ENCODE measurements at regions of chr7 and their contacts with region 1.

Region 1: DNA sequence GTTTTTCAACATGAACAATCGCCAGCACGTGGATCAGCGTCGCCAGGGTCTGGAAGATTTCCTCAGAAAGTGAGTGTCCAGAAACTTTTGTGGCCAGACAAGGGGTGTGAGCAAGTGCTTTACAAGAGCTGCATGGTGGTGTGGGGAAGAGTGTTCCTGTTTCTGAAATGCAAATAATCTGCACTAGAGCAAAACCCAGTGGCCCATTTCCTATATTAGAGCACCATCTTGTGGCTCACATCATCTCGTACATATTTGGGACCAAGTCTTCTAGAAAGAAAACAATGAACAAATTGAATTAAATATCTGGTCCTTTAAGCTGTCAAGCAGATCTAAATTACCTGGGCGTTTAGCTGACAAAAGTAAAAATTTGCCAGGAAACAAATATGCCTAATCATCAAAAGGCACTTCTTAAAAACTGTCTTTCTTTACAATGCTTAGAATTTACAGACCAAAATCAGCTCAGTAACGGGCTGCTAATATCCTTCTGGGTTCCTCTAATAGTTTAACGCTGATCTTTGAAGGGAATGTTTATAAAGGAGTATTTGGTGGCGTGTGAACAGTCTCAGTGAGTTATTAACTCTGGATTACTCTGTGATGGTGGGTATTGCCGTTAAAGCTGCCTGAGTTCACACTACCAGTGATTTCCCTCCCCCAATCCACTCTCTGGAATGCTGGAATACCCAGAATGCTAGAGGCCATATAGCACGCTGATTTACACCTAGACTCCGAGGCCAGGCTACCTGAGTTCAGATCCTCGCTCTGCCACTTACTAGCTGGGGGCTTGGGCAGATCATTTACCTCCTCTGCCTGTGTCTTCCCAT is 73.6 kb downstream of the SNX10 start:
- DNase-seq: peak in 8 of 9 experiments; percentile 20 to 82 (median 53)
- ATAC-seq: peak; percentile 77
- H3K4me3 ChIP-seq: no peak overlapping the region
- H3K4me3 Mint-ChIP-seq: no peak overlapping the region
- H3K27ac ChIP-seq: no peak overlapping the region
- H3K27ac Mint-ChIP-seq: no peak overlapping the region
- H3K4me1 ChIP-seq: peaks cover 8% of the 10 kb centered on the region
- H3K4me1 Mint-ChIP-seq: peaks cover 11% of the 10 kb centered on the region
- H3K27me3 ChIP-seq: no peaks in the 10 kb centered on the region
- H3K27me3 Mint-ChIP-seq: no peaks in the 10 kb centered on the region
- CTCF ChIP-seq: peak; percentile 75

Region 2: GRCh38 chr7:25259587-25260243 is 1105.6 kb before region 1 on chr7:
- CTCF ChIA-PET with region 1: no interaction called
- POLR2A ChIA-PET with region 1: no interaction called
- intact Hi-C with region 1: loop called in 1 of 2 experiments (anchors 10 kb)
- DNase-seq: peak; percentile 24 to 83 (median 65)
- ATAC-seq: peak; percentile 83
- H3K4me3 ChIP-seq: no peak overlapping the region
- H3K4me3 Mint-ChIP-seq: peak overlapping the region; percentile 61
- H3K27ac ChIP-seq: no peak overlapping the region
- H3K27ac Mint-ChIP-seq: no peak overlapping the region
- H3K4me1 ChIP-seq: peaks cover 20% of the 10 kb centered on the region
- H3K4me1 Mint-ChIP-seq: peaks cover 25% of the 10 kb centered on the region
- H3K27me3 ChIP-seq: no peaks in the 10 kb centered on the region
- H3K27me3 Mint-ChIP-seq: peaks cover 3% of the 10 kb centered on the region
- CTCF ChIP-seq: peak; percentile 81

Region 3: DNA sequence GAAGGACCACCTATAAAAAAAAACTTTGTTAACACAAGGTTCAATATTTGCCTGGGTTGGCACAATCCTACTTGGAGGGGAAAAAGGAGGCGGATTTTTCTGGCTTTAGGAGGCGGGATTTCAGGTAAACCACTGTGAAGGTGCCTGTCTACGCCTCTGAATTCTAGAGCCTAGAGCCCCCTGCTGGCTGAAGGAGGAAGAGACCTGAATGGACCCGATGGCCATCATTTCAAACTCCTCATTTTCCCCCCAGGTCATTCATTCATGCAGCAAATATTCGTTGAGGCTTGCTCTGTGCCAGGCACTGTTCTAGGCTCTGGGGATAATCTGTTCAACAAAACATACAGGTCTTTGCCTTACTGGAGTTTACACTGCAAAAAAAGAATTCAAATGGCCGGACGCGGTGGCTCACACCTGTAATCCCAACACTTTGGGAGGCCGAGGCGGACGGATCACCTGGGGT is 303.6 kb before region 1 on chr7:
- CTCF ChIA-PET with region 1: interaction called, 7 read pairs
- POLR2A ChIA-PET with region 1: no interaction called
- intact Hi-C with region 1: loop called in 1 of 2 experiments (anchors 1 kb)
- DNase-seq: peak; percentile 30 to 81 (median 73)
- ATAC-seq: peak; percentile 85
- H3K4me3 ChIP-seq: no peak overlapping the region
- H3K4me3 Mint-ChIP-seq: no peak overlapping the region
- H3K27ac ChIP-seq: no peak overlapping the region
- H3K27ac Mint-ChIP-seq: no peak overlapping the region
- H3K4me1 ChIP-seq: no peaks in the 10 kb centered on the region
- H3K4me1 Mint-ChIP-seq: no peaks in the 10 kb centered on the region
- H3K27me3 ChIP-seq: no peaks in the 10 kb centered on the region
- H3K27me3 Mint-ChIP-seq: peaks cover 20% of the 10 kb centered on the region
- CTCF ChIP-seq: peak; percentile 91

Region 4: DNA sequence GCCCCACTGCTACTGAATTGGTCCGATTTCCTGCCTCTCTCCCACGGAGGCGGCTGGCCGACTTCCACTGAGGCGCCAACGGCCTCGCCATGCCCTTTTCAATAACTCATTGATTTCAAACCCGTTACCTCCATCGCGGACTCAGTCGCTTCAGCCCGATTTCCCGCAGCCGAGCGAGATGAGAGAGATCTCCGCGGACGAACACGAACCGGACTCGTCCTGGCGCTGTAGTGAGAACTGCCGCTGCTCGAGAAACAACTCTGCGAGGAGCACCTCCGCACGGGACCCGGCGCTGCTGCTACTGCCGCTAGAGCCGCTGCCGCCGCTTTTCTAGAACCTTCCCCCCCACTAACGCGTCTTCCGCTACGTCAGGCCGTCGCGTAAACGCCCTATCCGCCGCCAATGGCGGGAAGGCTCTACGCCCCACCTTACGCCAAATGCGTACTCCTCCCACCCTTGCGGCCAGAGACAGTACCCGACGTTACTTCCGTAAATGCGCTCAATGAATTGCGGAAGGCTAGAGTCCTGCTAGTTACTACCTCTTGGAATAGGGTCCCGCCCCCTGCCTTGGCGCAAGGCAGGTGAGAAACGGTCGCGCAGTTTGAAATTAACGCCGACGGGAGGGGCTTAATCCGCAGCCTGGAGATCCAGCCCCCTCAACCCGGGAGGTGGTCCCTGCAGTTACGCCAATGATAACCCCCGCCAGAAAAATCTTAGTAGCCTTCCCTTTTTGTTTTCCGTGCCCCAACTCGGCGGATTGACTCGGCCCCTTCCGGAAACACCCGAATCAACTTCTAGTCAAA is 164.6 kb before region 1 on chr7 and contains the start of gene HNRNPA2B1:
- CTCF ChIA-PET with region 1: interaction called, 37 read pairs
- POLR2A ChIA-PET with region 1: interaction called, 9 read pairs
- intact Hi-C with region 1: loop called (anchors 2 kb)
- DNase-seq: peak; percentile 96 to 100 (median 98)
- ATAC-seq: peak; percentile 75
- H3K4me3 ChIP-seq: peak within 1 kb of the TSS; percentile 75 to 95
- H3K4me3 Mint-ChIP-seq: peak within 1 kb of the TSS; percentile 100
- H3K27ac ChIP-seq: peak within 1 kb of the TSS; percentile 92 to 95
- H3K27ac Mint-ChIP-seq: peak within 1 kb of the TSS; percentile 99
- H3K4me1 ChIP-seq: peaks cover 49% of the 10 kb centered on the region
- H3K4me1 Mint-ChIP-seq: peaks cover 51% of the 10 kb centered on the region
- H3K27me3 ChIP-seq: no peaks in the 10 kb centered on the region
- H3K27me3 Mint-ChIP-seq: no peaks in the 10 kb centered on the region
- CTCF ChIP-seq: no peak
- total RNA-seq, gene HNRNPA2B1: 241 to 247 TPM

Region 5: DNA sequence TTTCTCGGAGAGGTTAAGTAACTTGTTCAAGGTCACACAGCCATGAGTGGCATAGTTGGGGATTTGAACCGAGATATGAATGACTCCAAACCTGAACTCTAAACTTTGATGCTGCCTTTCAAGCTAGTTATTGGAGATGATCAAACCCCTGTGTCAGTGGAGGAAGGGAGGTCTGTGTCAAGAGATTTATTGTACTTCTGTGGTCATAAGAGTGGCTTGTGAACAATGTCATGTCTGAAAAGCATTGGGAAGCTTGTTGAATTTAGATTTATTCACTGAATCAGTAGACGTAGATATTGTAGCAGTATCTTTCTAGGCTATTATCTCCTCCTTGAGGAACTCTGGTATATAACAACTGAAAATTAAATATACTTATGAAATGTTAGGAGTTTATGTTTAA is 46.4 kb before region 1 on chr7:
- CTCF ChIA-PET with region 1: interaction called, 10 read pairs
- POLR2A ChIA-PET with region 1: no interaction called
- intact Hi-C with region 1: no loop called
- DNase-seq: no peak
- ATAC-seq: no peak
- H3K4me3 ChIP-seq: no peak overlapping the region
- H3K4me3 Mint-ChIP-seq: no peak overlapping the region
- H3K27ac ChIP-seq: no peak overlapping the region
- H3K27ac Mint-ChIP-seq: no peak overlapping the region
- H3K4me1 ChIP-seq: no peaks in the 10 kb centered on the region
- H3K4me1 Mint-ChIP-seq: peaks cover 5% of the 10 kb centered on the region
- H3K27me3 ChIP-seq: no peaks in the 10 kb centered on the region
- H3K27me3 Mint-ChIP-seq: no peaks in the 10 kb centered on the region
- CTCF ChIP-seq: no peak

Region 6: GRCh38 chr7:26667500-26668133 is 302.3 kb after region 1 on chr7:
- CTCF ChIA-PET with region 1: interaction called, 44 read pairs
- POLR2A ChIA-PET with region 1: interaction called, 5 read pairs
- intact Hi-C with region 1: loop called (anchors 1 kb)
- DNase-seq: peak; percentile 4 to 82 (median 46)
- ATAC-seq: peak; percentile 70
- H3K4me3 ChIP-seq: no peak overlapping the region
- H3K4me3 Mint-ChIP-seq: no peak overlapping the region
- H3K27ac ChIP-seq: no peak overlapping the region
- H3K27ac Mint-ChIP-seq: no peak overlapping the region
- H3K4me1 ChIP-seq: no peaks in the 10 kb centered on the region
- H3K4me1 Mint-ChIP-seq: peaks cover 20% of the 10 kb centered on the region
- H3K27me3 ChIP-seq: no peaks in the 10 kb centered on the region
- H3K27me3 Mint-ChIP-seq: peaks cover 12% of the 10 kb centered on the region
- CTCF ChIP-seq: peak; percentile 70

Region 7: GRCh38 chr7:26813432-26813831 is 448.1 kb after region 1 on chr7:
- CTCF ChIA-PET with region 1: no interaction called
- POLR2A ChIA-PET with region 1: no interaction called
- intact Hi-C with region 1: no loop called
- DNase-seq: no peak
- ATAC-seq: no peak
- H3K4me3 ChIP-seq: no peak overlapping the region
- H3K4me3 Mint-ChIP-seq: no peak overlapping the region
- H3K27ac ChIP-seq: no peak overlapping the region
- H3K27ac Mint-ChIP-seq: no peak overlapping the region
- H3K4me1 ChIP-seq: no peaks in the 10 kb centered on the region
- H3K4me1 Mint-ChIP-seq: no peaks in the 10 kb centered on the region
- H3K27me3 ChIP-seq: no peaks in the 10 kb centered on the region
- H3K27me3 Mint-ChIP-seq: no peaks in the 10 kb centered on the region
- CTCF ChIP-seq: no peak